HCT116 (cell line): ENCODE measurements at regions of chr6 and their contacts with region 1.

Region 1: DNA sequence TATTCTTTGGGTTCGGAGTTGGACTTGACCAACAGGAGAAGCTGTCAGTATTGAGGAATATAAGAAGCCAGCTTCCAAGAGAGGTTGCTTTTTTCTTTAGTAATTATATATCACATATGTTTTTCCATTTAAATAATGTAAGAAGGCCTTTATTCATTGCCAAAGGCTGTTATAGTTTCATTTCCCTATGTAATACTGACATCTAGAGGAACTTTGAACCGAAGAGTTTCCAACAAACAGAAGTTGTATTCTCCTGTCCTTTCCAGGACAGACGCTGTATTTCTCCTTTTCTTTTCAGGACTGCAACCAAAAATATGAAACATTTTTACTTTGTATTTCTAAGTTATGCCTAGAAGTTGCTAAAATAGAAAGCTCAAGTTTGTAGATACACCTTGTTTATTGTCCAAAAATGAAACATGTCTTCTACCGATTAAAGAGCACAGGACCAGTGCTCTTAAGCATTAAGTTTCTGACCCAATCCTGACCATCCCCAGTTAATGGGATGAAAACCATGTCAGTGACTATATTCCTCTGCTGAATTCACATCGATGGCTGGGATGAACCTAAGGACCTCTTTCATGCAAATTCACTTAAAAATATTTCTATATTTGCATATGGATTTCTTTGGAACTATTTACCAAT is 55.1 kb downstream of the MYLK4 start:
- DNase-seq: peak; percentile 36
- ATAC-seq: peak; percentile 84
- H3K4me3 ChIP-seq: no peak overlapping the region
- H3K27ac ChIP-seq: no peak overlapping the region
- H3K4me1 ChIP-seq: no peaks in the 10 kb centered on the region
- H3K27me3 ChIP-seq: 0 out of 2 replicates have a peak, but pooled peaks cover 6% of the 10 kb centered on the region
- CTCF ChIP-seq: peak; percentile 29 to 67 (median 53); a peak in 4 of 6 replicates
- POLR2A ChIP-seq: no peak
- RAD21 ChIP-seq: peak; percentile 91

Region 2: GRCh38 chr6:1604158-1605030 is 1091.2 kb before region 1 on chr6:
- CTCF ChIA-PET with region 1: interaction called, 3 read pairs
- POLR2A ChIA-PET with region 1: no interaction called
- RAD21 ChIA-PET with region 1: no interaction called
- intact Hi-C with region 1: loop called (anchors 2 kb)
- DNase-seq: no peak
- ATAC-seq: peak; percentile 93
- H3K4me3 ChIP-seq: peak overlapping the region; percentile 35 to 53
- H3K27ac ChIP-seq: no peak overlapping the region; the same call in 1 of the 2 replicates
- H3K4me1 ChIP-seq: peaks cover 0 to 16% of the 10 kb centered on the region in 2 experiments; a peak in 3 of 4 replicates
- H3K27me3 ChIP-seq: no peaks in the 10 kb centered on the region
- CTCF ChIP-seq: peak; percentile 77 to 84 (median 77)
- POLR2A ChIP-seq: no peak
- RAD21 ChIP-seq: peak; percentile 95

Region 3: GRCh38 chr6:2103644-2104523 is 591.7 kb before region 1 on chr6:
- CTCF ChIA-PET with region 1: no interaction called
- POLR2A ChIA-PET with region 1: no interaction called
- RAD21 ChIA-PET with region 1: no interaction called
- intact Hi-C with region 1: loop called (anchors 10 kb)
- DNase-seq: peak; percentile 19
- ATAC-seq: peak; percentile 70
- H3K4me3 ChIP-seq: no peak overlapping the region
- H3K27ac ChIP-seq: peak overlapping the region; percentile 29
- H3K4me1 ChIP-seq: peaks cover 6 to 9% of the 10 kb centered on the region in 2 experiments; a peak in 3 of 4 replicates
- H3K27me3 ChIP-seq: no peaks in the 10 kb centered on the region
- CTCF ChIP-seq: peak in 2 of 3 experiments; percentile 45 to 62; a peak in 4 of 6 replicates
- POLR2A ChIP-seq: no peak
- RAD21 ChIP-seq: peak; percentile 78

Region 4: GRCh38 chr6:2448820-2449571 is 246.6 kb before region 1 on chr6:
- CTCF ChIA-PET with region 1: no interaction called
- POLR2A ChIA-PET with region 1: no interaction called
- RAD21 ChIA-PET with region 1: no interaction called
- intact Hi-C with region 1: loop called (anchors 5 kb)
- DNase-seq: peak; percentile 59
- ATAC-seq: peak; percentile 89
- H3K4me3 ChIP-seq: no peak overlapping the region
- H3K27ac ChIP-seq: no peak overlapping the region
- H3K4me1 ChIP-seq: peaks cover 0 to 4% of the 10 kb centered on the region in 2 experiments; a peak in 1 of 4 replicates
- H3K27me3 ChIP-seq: no peaks in the 10 kb centered on the region
- CTCF ChIP-seq: peak; percentile 69 to 83 (median 83)
- POLR2A ChIP-seq: no peak
- RAD21 ChIP-seq: peak; percentile 94

Region 5: DNA sequence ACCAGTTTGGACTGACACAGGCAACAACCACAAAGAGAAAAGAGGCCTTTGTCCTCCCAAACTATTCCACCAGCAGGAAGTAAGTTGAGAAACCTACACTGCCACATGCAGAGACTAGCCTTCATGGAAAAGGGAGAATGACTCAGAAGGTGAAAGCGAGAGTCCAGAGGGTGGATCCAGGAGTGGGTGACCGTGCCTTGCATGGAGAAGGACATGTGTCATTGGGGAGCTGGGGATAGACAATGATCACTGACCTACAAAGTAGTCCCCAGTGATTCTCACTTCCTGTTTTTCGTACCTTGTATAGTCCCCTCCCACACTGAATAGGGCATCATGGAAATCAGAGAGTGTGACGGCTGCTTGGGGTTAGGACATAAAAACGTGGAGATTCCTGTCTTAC is 36.8 kb before region 1 on chr6:
- CTCF ChIA-PET with region 1: no interaction called
- POLR2A ChIA-PET with region 1: no interaction called
- RAD21 ChIA-PET with region 1: no interaction called
- intact Hi-C with region 1: no loop called
- DNase-seq: peak; percentile 10
- ATAC-seq: peak; percentile 52
- H3K4me3 ChIP-seq: no peak overlapping the region
- H3K27ac ChIP-seq: no peak overlapping the region
- H3K4me1 ChIP-seq: peaks cover 0 to 15% of the 10 kb centered on the region in 2 experiments; a peak in 2 of 4 replicates
- H3K27me3 ChIP-seq: no peaks in the 10 kb centered on the region
- CTCF ChIP-seq: no peak
- POLR2A ChIP-seq: no peak
- RAD21 ChIP-seq: no peak

Region 6: GRCh38 chr6:2791124-2791974 is 95.8 kb after region 1 on chr6:
- CTCF ChIA-PET with region 1: no interaction called
- POLR2A ChIA-PET with region 1: no interaction called
- RAD21 ChIA-PET with region 1: no interaction called
- intact Hi-C with region 1: no loop called
- DNase-seq: peak; percentile 75
- ATAC-seq: peak; percentile 89
- H3K4me3 ChIP-seq: no peak overlapping the region
- H3K27ac ChIP-seq: peak overlapping the region; percentile 14; the same call in 1 of the 2 replicates
- H3K4me1 ChIP-seq: peaks cover 13 to 61% of the 10 kb centered on the region in 2 experiments; a peak in 3 of 4 replicates
- H3K27me3 ChIP-seq: no peaks in the 10 kb centered on the region
- CTCF ChIP-seq: peak; percentile 82 to 91 (median 86)
- POLR2A ChIP-seq: no peak
- RAD21 ChIP-seq: peak; percentile 99